ENCODE measurements at regions of chr2 and their contacts with region 1.

Region 1: GRCh38 chr2:106193977-106194778 is at the start of gene UXS1:
- DNase-seq: peak; percentile 98
- ATAC-seq: peak; percentile 95
- total RNA-seq, gene UXS1: 25.7 to 27.6 TPM

Region 2: GRCh38 chr2:106115250-106115649 is 78.9 kb before region 1 on chr2:
- intact Hi-C with region 1: loop called in 1 of 2 experiments (anchors 5 kb)
- DNase-seq: no peak
- ATAC-seq: peak in 1 of 2 donors; percentile 62

Measured in left cardiac atrium (tissue), 4 donors.